ENCODE measurements at regions of chr14 and their contacts with region 1.

Region 1: GRCh38 chr14:96275177-96276112 is 19.4 kb downstream of the BDKRB1 start:
- DNase-seq: peak; percentile 52
- H3K4me3 ChIP-seq: no peak overlapping the region
- CTCF ChIP-seq: peak; percentile 97

Region 2: DNA sequence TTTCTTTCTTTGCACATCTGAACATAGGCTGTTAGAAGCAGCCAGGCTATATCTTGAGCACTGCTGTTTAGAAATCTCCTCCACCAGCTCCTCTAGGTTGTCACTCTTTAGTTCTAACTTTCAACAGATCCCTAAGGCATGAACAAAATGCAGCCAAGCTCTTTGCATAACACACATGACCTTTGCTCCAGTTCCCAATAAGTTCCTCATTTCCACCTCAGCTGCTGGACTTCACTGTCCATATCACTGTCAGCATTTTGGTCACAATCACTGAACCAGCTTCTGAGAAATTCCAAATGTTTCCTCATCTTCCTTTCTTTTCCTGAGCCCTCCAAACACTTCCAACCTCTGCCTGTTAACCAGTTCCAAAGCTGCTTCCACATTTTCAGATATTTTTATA is 263.8 kb before region 1 on chr14:
- CTCF ChIA-PET with region 1: interaction called, 11 read pairs
- POLR2A ChIA-PET with region 1: no interaction called
- DNase-seq: no peak
- H3K4me3 ChIP-seq: no peak overlapping the region
- CTCF ChIP-seq: no peak

Region 3: GRCh38 chr14:96146131-96146806 is 129.2 kb before region 1 on chr14:
- CTCF ChIA-PET with region 1: interaction called, 27 read pairs
- POLR2A ChIA-PET with region 1: no interaction called
- DNase-seq: peak; percentile 45
- H3K4me3 ChIP-seq: no peak overlapping the region
- CTCF ChIP-seq: peak; percentile 0

Region 4: DNA sequence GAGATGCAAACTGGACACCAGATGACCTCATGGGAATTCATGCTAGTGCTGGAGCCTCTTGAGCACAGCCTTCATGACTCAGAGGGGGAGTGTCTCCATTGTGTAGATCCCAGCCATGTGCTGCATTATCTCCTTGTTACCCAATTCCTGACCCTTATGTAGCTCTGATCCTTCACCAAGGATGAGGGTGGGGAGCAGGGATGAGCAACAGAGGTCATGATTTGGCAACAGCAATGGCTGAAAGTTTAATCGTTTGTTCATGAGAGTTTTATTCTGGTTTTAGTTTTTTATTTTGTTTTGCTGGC is 29.0 kb before region 1 on chr14:
- CTCF ChIA-PET with region 1: interaction called, 73 read pairs
- POLR2A ChIA-PET with region 1: no interaction called
- DNase-seq: peak; percentile 94
- H3K4me3 ChIP-seq: no peak overlapping the region
- CTCF ChIP-seq: no peak

Region 5: GRCh38 chr14:96297000-96297399 is 21.6 kb after region 1 on chr14:
- CTCF ChIA-PET with region 1: interaction called, 20 read pairs
- POLR2A ChIA-PET with region 1: no interaction called
- DNase-seq: no peak
- H3K4me3 ChIP-seq: no peak overlapping the region
- CTCF ChIP-seq: peak; percentile 20